AG04449 (cell line): ENCODE measurements at regions of chr1 and their contacts with region 1.

Region 1: DNA sequence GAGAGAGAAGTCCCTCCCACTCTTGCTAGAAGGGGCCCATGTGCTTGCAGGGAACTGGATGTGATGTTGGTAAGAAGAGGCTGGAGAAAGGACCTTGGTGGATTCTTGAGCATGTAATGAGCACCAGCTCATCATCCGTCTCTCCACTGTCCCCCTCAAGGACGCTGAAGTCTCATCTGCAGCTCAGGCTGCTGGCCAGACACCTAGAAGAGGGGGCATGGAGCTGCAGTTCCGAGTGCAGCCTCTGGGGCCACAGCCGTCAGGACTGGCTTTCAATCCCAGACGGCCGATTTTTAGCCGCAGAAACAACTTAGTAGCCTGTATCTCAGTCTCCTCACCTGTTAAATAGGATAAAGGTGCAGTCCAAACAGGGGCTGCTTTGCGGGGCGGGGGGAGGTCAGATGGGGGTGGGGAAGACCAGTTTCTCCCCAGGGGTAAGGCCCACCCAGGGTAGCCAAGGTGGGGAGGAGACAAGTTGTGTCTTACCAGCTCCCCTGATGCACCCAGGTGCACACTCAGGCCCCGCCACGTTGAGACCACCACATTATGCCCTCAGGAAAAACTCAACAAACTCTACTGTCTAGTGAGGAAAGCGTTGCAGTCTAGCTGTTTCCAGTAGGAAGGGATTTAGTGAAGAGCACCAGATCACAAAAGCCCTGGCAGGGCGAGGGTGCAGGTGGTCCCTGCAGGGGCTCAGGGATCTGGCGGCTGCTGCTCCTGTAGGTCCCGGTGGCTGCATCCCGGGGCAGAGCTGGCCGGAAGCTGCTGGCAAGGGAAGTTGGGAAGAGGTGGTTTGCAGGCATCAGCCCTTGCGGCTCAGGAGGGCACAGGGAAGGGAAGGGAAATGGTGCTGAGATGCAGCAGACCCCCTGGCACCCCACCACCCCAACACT is 29.5 kb downstream of the LDLRAP1 start:
- DNase-seq: no peak
- H3K4me3 ChIP-seq: no peak overlapping the region
- CTCF ChIP-seq: peak; percentile 85

Region 2: GRCh38 chr1:25549273-25550154 is 23.4 kb before region 1 on chr1:
- CTCF ChIA-PET with region 1: interaction called, 23 read pairs
- POLR2A ChIA-PET with region 1: no interaction called
- DNase-seq: no peak
- H3K4me3 ChIP-seq: no peak overlapping the region
- CTCF ChIP-seq: no peak

Region 3: DNA sequence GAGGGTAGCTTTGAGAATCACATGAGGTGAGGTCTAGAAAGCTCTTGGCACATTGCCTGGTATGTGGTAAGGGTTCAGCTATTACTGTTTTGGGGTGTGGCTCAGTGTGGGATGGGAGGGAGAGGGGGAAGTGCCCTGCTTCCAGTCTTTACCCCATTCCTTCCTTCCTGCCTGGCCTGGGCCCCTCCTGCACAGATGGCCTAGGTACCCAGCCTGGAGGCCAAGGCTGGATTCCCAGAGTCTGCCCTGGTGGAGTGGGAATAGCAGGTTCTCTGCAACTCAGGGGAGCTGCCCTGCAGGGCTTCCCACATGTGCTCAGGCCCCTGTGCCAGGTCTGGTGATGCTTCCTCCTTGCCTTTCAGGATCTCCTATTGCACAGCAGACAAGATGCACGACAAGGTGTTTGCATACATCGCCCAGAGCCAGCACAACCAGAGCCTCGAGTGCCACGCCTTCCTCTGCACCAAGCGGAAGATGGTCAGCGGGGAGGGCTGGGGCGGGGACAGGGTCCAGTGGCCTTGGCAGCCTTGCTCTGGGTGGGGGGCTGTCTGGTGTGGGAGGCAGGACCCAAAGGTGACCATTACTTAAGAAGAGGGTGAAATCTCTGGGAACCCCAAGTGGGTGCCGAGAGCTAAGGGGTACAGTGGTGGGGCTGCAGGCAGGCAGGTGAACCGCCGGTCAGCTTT is 16.0 kb before region 1 on chr1:
- CTCF ChIA-PET with region 1: interaction called, 23 read pairs
- POLR2A ChIA-PET with region 1: no interaction called
- DNase-seq: no peak
- H3K4me3 ChIP-seq: no peak overlapping the region
- CTCF ChIP-seq: no peak

Region 4: GRCh38 chr1:25727635-25728330 is 154.8 kb after region 1 on chr1:
- CTCF ChIA-PET with region 1: no interaction called
- POLR2A ChIA-PET with region 1: no interaction called
- DNase-seq: no peak
- H3K4me3 ChIP-seq: no peak overlapping the region
- CTCF ChIP-seq: no peak